Posterior cingulate gyrus (tissue), 11 donors: ENCODE measurements at regions of chr2 and their contacts with region 1.

Region 1: GRCh38 chr2:203650860-203651613 is 55.4 kb upstream of the CD28 start:
- DNase-seq: no peak

Region 2: GRCh38 chr2:203484266-203485112 is 166.5 kb before region 1 on chr2:
- intact Hi-C with region 1: loop called (anchors 2 kb)
- DNase-seq: peak in 3 of 10 donors; percentile 26 to 64 (median 27)

Region 3: DNA sequence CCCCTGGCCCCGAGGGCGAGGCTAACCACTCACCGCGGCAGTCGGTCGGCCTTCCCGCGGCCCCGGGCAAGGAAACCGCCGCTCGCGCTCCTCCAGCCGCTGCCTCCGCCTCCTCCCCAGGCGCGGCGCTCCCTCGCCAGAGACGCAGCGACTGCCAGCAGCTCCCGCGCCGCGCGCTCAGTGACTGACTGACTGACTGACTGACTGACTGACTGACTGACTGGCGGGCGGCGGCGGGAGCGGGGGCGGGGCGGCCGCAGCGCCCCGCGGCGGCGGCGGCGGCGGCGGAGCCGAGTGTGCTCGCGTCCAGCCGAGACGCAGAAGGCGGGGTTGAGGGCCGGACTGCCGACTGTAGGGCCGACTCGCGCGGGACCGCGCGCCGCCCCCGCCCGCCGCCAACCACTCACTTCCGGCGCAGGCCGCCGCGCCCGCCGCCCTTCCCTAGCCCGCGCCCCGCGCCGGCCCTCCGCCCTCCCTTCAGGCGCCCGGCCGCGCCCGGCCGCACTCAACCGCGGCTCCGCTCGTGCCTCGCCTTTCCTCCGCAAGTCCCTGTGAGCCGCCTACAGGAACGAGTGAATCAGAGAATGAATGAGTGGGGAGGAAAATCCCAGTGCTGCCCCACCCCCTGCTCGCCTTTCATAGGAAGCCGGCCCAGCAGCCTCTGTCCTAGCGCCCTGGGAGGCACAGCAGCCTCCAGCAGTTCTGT is 115.8 kb before region 1 on chr2 and contains the start of gene RAPH1:
- intact Hi-C with region 1: loop called (anchors 5 kb)
- DNase-seq: peak; percentile 43 to 94 (median 68)

Region 4: GRCh38 chr2:203759690-203760365 is 108.8 kb after region 1 on chr2:
- intact Hi-C with region 1: no loop called
- DNase-seq: no peak

Region 5: DNA sequence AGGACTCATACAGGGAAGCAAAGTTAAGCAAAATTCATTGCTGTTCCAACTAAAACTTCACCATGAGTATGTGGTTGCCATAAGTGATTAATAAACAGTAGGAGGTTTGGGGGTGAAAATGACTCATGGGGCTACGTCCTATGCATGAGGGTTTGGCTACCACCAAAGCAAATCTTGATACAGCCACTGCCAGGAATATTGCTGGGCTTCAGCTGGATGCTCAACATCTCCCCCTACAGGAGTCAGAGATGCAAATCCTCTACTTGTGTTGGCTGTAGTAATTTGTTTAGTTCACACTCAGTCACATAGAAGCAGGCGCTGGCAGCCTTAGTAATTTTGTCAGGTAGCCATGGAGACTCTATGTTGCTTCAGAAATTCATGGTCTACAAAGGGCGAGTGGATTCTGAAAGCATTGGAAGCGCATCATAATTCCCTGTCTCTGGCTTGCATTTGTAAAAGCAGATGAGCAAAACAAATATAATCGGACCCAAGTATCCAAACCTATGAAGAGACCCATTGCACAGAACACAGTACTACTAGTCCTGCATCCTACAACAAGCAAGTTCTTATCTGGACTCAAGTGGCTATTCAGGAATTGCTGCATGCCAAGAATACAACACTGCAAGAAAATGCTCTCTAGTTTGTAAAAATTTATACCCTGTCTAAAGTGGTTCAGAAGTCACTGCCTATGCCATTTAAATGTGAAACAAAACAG is 131.4 kb after region 1 on chr2:
- intact Hi-C with region 1: loop called (anchors 10 kb)
- DNase-seq: peak in 6 of 10 donors; percentile 18 to 88 (median 32)

Region 6: GRCh38 chr2:203909261-203909967 is 258.4 kb after region 1 on chr2:
- intact Hi-C with region 1: loop called (anchors 1 kb)
- DNase-seq: no peak

Region 7: GRCh38 chr2:204468746-204469429 is 817.9 kb after region 1 on chr2:
- intact Hi-C with region 1: no loop called
- DNase-seq: no peak